Gastrocnemius medialis (tissue), 4 donors: ENCODE measurements at regions of chr7 and their contacts with region 1.

Region 1: DNA sequence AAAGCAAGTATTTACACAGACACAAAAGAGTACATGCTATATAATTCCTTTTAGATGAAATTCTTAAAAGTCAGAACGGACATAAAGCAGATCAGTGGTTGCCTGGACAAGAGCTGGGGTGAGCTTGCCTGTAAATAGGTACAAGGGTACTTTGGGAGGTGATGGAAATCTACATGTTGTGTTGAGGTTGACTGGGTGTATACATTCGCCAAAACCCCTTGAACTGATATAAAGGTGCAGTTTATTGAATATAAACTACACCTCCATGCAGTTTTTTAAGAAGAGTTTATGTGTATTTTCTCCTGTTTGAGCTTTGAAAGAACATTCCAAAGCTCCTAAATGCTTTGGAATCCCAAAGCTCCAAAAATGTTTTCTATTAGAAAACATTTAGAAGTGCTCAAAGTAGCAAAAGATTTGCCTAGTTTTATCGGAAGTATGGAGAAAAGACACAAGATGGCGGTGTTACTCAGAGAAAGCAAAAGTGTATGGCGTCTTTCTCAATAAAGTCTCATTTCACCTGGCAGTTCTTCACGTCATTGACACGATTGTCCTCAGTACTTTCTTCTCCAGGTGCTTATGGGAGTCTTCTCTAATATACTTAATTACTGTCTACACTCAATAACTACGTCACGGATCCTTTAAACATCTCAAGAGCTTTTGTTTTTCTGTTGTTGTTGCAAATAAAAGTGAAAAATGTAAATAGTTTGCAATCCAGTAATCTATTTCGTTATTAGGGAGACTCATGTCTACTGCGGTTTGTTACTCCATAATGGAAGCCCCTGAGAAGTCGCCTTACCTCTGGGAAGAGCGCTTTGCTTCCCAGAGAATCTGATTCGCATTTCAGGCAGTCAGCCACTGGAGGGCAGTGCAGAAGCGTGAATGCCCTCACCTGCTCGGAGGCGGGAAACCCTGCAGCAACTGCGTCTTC is 14.7 kb upstream of the SEC61G start:
- DNase-seq: peak; percentile 58 to 73
- ATAC-seq: peak; percentile 96 to 98
- H3K4me3 ChIP-seq: peak overlapping the region; percentile 41 to 63 (median 43)
- H3K27ac ChIP-seq: peak overlapping the region in 1 of 4 donors; percentile 28
- H3K4me1 ChIP-seq: peaks cover 0 to 3% of the 10 kb centered on the region in 2 donors
- H3K27me3 ChIP-seq: peaks cover 0 to 2% (median 0%) of the 10 kb centered on the region in 3 donors
- CTCF ChIP-seq: peak; percentile 76 to 84 (median 82)
- POLR2A ChIP-seq: no peak

Region 2: DNA sequence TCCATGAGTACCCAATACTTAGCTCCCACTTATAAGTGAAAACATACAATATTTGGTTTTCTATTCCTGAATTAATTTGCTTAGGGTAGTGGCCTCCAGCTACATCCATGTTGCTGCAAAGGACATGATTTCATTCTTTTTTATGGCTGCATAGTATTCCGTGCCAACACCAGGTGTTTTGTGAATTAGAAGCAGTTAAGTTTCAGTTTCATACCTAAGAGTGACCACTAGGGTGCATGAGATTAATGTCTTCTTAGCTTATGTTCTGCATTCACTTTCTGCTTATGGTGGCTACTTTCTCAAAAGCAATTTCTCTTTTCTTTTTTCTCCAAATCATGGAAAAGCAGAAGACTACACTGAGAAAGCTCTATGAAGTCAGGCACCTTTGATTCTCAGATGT is 296.7 kb before region 1 on chr7:
- in situ Hi-C with region 1: no loop called
- intact Hi-C with region 1: no loop called
- DNase-seq: no peak
- ATAC-seq: no peak
- H3K4me3 ChIP-seq: no peak overlapping the region
- H3K27ac ChIP-seq: no peak overlapping the region
- H3K4me1 ChIP-seq: no peaks in the 10 kb centered on the region
- H3K27me3 ChIP-seq: no peaks in the 10 kb centered on the region
- CTCF ChIP-seq: no peak
- POLR2A ChIP-seq: no peak

Region 3: GRCh38 chr7:54788664-54789063 is 14.9 kb after region 1 on chr7:
- in situ Hi-C with region 1: no loop called
- intact Hi-C with region 1: loop called (anchors 1 kb)
- DNase-seq: peak in 1 of 2 donors; percentile 51
- ATAC-seq: peak; percentile 91 to 98
- H3K4me3 ChIP-seq: no peak overlapping the region
- H3K27ac ChIP-seq: no peak overlapping the region
- H3K4me1 ChIP-seq: peaks cover 2 to 7% of the 10 kb centered on the region in 2 donors
- H3K27me3 ChIP-seq: no peaks in the 10 kb centered on the region
- CTCF ChIP-seq: peak; percentile 32 to 68 (median 55)
- POLR2A ChIP-seq: no peak

Region 4: GRCh38 chr7:54839538-54840213 is 65.9 kb after region 1 on chr7:
- in situ Hi-C with region 1: no loop called
- intact Hi-C with region 1: loop called (anchors 5 kb)
- DNase-seq: peak; percentile 53 to 76
- ATAC-seq: peak; percentile 54 to 60
- H3K4me3 ChIP-seq: no peak overlapping the region
- H3K27ac ChIP-seq: no peak overlapping the region
- H3K4me1 ChIP-seq: peaks cover 12 to 16% of the 10 kb centered on the region in 2 donors
- H3K27me3 ChIP-seq: no peaks in the 10 kb centered on the region
- CTCF ChIP-seq: peak; percentile 19 to 58 (median 52)
- POLR2A ChIP-seq: no peak

Region 5: GRCh38 chr7:55177589-55178261 is 404.0 kb after region 1 on chr7:
- in situ Hi-C with region 1: no loop called
- intact Hi-C with region 1: no loop called
- DNase-seq: peak in 1 of 2 donors; percentile 11
- ATAC-seq: peak in 1 of 2 donors; percentile 26
- H3K4me3 ChIP-seq: no peak overlapping the region
- H3K27ac ChIP-seq: peak overlapping the region in 2 of 4 donors; percentile 3 to 43
- H3K4me1 ChIP-seq: peaks cover 16 to 18% of the 10 kb centered on the region in 2 donors
- H3K27me3 ChIP-seq: no peaks in the 10 kb centered on the region
- CTCF ChIP-seq: no peak
- POLR2A ChIP-seq: no peak

Region 6: GRCh38 chr7:55260671-55261385 is 487.1 kb after region 1 on chr7:
- in situ Hi-C with region 1: loop called in 2 of 4 experiments (anchors 5 kb)
- intact Hi-C with region 1: no loop called
- DNase-seq: no peak
- ATAC-seq: no peak
- H3K4me3 ChIP-seq: no peak overlapping the region
- H3K27ac ChIP-seq: no peak overlapping the region
- H3K4me1 ChIP-seq: peaks cover 0 to under 1% of the 10 kb centered on the region in 2 donors
- H3K27me3 ChIP-seq: peaks cover 0 to 2% (median 0%) of the 10 kb centered on the region in 3 donors
- CTCF ChIP-seq: no peak
- POLR2A ChIP-seq: no peak

Region 7: GRCh38 chr7:55415173-55415778 is 641.5 kb after region 1 on chr7:
- in situ Hi-C with region 1: loop called in 2 of 4 experiments (anchors 25 kb)
- intact Hi-C with region 1: loop called (anchors 5 kb)
- DNase-seq: peak; percentile 53 to 64
- ATAC-seq: peak in 1 of 2 donors; percentile 73
- H3K4me3 ChIP-seq: no peak overlapping the region
- H3K27ac ChIP-seq: no peak overlapping the region
- H3K4me1 ChIP-seq: no peaks in the 10 kb centered on the region
- H3K27me3 ChIP-seq: no peaks in the 10 kb centered on the region
- CTCF ChIP-seq: peak; percentile 66 to 88 (median 78)
- POLR2A ChIP-seq: no peak